ENCODE measurements at regions of chr3 and their contacts with region 1.

Region 1: DNA sequence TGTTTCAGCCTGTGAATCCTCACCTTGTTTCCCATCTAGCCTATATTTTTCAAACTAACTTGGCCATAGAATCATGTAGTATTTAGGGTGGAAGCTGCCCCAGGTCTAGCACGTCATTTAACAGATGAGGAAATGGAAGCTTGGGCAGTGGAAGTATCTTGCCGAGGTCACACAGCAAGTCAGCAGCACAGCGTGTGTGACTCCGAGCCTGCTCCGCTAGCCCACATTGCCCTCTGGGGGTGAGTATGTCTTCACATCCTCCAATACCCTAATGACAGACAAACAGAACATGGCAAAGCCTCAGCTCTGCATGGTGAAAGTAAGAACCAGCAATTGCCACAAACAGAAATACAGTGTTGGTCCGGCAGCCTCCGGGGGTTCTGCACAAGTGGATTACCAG is 2.2 kb upstream of the CCR5 start:
- DNase-seq: peak; percentile 79
- ATAC-seq: peak; percentile 55
- H3K4me3 Mint-ChIP-seq: no peak overlapping the region
- H3K27ac Mint-ChIP-seq: peak overlapping the region; percentile 79
- H3K4me1 Mint-ChIP-seq: peaks cover 43% of the 10 kb centered on the region
- H3K27me3 Mint-ChIP-seq: peaks cover 6% of the 10 kb centered on the region
- CTCF ChIP-seq: peak; percentile 44

Region 2: GRCh38 chr3:46089237-46090011 is 279.1 kb before region 1 on chr3:
- CTCF ChIA-PET with region 1: interaction called, 18 read pairs
- POLR2A ChIA-PET with region 1: interaction called, 3 read pairs
- intact Hi-C with region 1: no loop called
- DNase-seq: peak; percentile 55
- ATAC-seq: peak; percentile 76
- H3K4me3 Mint-ChIP-seq: no peak overlapping the region
- H3K27ac Mint-ChIP-seq: no peak overlapping the region
- H3K4me1 Mint-ChIP-seq: peaks cover 20% of the 10 kb centered on the region
- H3K27me3 Mint-ChIP-seq: peaks cover 14% of the 10 kb centered on the region
- CTCF ChIP-seq: no peak

Region 3: DNA sequence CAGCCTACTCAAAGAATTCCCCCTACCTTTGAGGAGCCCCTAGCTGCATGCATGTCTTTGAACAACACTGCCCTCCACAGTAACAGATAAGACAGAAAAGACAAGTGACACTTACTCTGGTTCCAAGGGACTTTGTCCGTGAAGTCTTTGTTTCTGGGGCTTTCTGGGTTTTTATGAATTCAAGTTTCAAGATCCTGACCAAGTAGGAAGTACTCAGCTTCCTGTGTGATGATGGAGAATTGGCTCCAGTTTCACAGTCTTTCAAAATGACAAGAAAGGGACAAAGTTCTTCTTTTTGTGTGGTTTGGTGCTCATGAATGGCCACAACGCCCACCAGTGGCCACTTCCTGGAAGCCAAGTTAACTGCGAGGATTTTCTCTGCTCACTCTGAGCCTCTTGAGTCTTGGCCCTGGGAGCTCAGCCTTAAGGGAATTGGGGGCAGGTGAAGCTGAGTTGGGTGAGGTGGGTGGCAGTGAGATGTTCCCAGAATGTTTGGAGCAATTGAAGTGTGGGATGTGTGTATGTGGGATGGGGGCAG is 160.3 kb before region 1 on chr3 and contains the start of gene CCR1:
- CTCF ChIA-PET with region 1: interaction called, 65 read pairs
- POLR2A ChIA-PET with region 1: interaction called, 6 read pairs
- intact Hi-C with region 1: loop called (anchors 5 kb)
- DNase-seq: peak; percentile 92
- ATAC-seq: peak; percentile 78
- H3K4me3 Mint-ChIP-seq: peak within 1 kb of the TSS; percentile 34
- H3K27ac Mint-ChIP-seq: peak within 1 kb of the TSS; percentile 55
- H3K4me1 Mint-ChIP-seq: peaks cover 22% of the 10 kb centered on the region
- H3K27me3 Mint-ChIP-seq: no peaks in the 10 kb centered on the region
- CTCF ChIP-seq: no peak
- total RNA-seq, gene CCR1: 0.67 to 1.1 TPM

Region 4: GRCh38 chr3:46266598-46266997 is 102.0 kb before region 1 on chr3:
- CTCF ChIA-PET with region 1: interaction called, 156 read pairs
- POLR2A ChIA-PET with region 1: interaction called, 3 read pairs
- intact Hi-C with region 1: no loop called
- DNase-seq: no peak
- ATAC-seq: no peak
- H3K4me3 Mint-ChIP-seq: no peak overlapping the region
- H3K27ac Mint-ChIP-seq: no peak overlapping the region
- H3K4me1 Mint-ChIP-seq: peaks cover 25% of the 10 kb centered on the region
- H3K27me3 Mint-ChIP-seq: peaks cover 12% of the 10 kb centered on the region
- CTCF ChIP-seq: no peak

Region 5: GRCh38 chr3:46284981-46285683 is 83.4 kb before region 1 on chr3:
- CTCF ChIA-PET with region 1: interaction called, 31 read pairs
- POLR2A ChIA-PET with region 1: interaction called, 21 read pairs
- intact Hi-C with region 1: loop called (anchors 5 kb)
- DNase-seq: peak; percentile 73
- ATAC-seq: peak; percentile 43
- H3K4me3 Mint-ChIP-seq: no peak overlapping the region
- H3K27ac Mint-ChIP-seq: peak overlapping the region; percentile 82
- H3K4me1 Mint-ChIP-seq: peaks cover 69% of the 10 kb centered on the region
- H3K27me3 Mint-ChIP-seq: peaks cover 1% of the 10 kb centered on the region
- CTCF ChIP-seq: no peak

Region 6: DNA sequence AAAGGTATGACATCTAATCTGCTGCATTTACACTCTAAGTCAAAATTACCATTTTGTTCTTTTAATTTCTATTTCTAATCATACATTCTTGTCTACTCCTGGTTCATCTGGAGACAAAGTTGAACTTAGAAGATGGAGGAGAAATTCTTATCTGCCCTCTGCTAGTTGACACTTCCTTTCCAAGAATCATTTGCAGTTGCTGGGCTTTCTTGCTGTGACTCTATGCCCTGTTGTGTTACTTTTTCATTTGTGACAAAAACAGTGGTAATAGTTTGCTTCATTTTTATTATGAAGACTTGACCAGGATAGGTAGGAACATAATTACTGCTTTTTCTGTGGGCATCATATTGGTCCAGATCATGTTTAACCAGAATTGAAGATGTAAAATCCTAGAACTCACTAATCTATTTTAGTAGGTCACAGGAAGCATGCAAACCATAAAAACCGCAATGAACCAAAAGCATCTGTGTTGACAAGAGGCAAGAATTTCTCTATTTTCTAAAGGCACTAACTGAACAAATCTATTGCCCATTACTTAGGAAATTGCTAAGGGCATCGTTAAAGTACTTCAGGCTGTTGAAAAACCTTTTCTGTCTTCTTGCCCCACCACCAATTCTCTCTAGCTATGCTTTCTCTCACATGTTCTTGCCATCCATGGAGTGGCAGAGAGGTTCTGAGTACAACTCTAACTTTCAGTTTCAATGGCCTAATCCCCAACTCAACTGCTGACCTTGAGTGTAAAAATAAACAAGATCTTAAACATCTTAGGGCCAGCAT is 18.9 kb before region 1 on chr3:
- CTCF ChIA-PET with region 1: interaction called, 25 read pairs
- POLR2A ChIA-PET with region 1: interaction called, 7 read pairs
- intact Hi-C with region 1: no loop called
- DNase-seq: peak; percentile 27
- ATAC-seq: peak; percentile 37
- H3K4me3 Mint-ChIP-seq: peak overlapping the region; percentile 18
- H3K27ac Mint-ChIP-seq: peak overlapping the region; percentile 83
- H3K4me1 Mint-ChIP-seq: peaks cover 59% of the 10 kb centered on the region
- H3K27me3 Mint-ChIP-seq: peaks cover 8% of the 10 kb centered on the region
- CTCF ChIP-seq: no peak